ENCODE measurements at regions of chr12 and their contacts with region 1.

Region 1: DNA sequence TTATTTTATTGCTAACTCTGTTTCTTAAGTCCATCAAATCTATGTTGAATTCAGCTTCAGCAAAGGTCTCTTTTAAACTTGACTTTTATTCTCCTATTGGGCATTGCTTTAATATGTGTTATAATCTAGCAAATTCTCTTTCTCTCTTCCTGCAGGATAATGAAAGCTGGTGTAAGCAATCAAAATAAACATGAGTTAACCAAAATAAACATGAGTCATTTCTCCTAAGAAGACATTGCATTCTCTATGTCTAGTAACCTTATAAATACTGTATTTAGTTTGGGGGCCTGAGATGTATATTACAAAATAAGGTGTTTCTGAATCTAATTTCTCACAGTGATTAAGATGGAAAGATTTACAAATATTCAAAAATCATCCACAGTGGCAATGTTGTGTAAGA is 739.1 kb upstream of the ATXN7L3B start:
- DNase-seq: no peak
- ATAC-seq: no peak
- H3K4me3 ChIP-seq: no peak overlapping the region
- H3K27ac ChIP-seq: no peak overlapping the region
- H3K4me1 ChIP-seq: no peaks in the 10 kb centered on the region
- H3K27me3 ChIP-seq: no peaks in the 10 kb centered on the region

Region 2: DNA sequence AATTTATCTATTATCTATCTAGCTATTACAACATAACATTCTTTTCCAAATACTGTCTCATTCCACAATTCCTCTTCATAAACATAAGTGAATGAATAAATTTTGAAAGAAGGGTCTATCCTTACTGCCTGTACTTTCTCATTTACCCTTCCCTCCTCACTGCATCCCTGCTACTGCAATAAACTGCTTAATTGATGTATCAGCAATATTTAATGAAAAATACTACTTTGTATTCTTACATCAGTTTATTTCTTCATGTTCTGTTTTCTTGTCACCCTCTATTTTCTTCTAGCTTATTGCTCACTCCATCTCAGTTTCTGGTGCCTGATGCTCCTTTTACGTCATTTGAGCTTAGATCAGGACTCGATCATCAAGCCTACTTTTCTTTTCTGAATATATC is 43.4 kb after region 1 on chr12:
- intact Hi-C with region 1: loop called in 1 of 4 experiments (anchors 5 kb)
- DNase-seq: no peak
- ATAC-seq: no peak
- H3K4me3 ChIP-seq: no peak overlapping the region
- H3K27ac ChIP-seq: no peak overlapping the region
- H3K4me1 ChIP-seq: no peaks in the 10 kb centered on the region
- H3K27me3 ChIP-seq: no peaks in the 10 kb centered on the region